IMR-90 (cell line): ENCODE measurements at regions of chr4 and their contacts with region 1.

Region 1: DNA sequence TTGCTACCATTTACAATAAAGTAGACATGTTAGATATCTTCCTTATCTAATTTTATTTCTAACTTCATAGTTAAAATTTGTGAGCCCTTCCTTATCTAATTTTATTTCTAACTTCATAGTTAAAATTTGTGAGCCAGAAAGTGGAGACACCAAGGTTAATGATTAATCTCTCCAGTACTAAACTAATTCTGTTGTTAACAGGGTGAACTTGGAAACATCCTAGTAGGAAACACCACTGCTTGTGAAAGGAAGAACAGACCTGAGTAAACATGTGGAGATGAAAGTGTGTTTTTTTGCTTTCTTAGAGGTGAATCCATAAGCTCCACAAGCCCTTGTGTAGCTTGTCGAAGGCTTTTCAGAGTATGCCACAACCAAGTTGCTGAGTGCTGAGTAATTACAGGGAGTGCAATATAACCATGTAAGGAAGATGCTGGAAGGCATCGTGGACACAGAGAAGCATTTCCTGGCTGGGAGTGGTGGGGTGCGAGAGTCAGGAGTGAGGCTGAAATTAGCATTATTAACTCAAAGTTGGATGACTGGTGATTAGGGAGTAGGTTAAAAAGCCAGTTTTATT is 118.6 kb upstream of the NEIL3 start:
- DNase-seq: peak; percentile 47
- ATAC-seq: peak; percentile 86
- H3K4me3 ChIP-seq: no peak overlapping the region
- H3K27ac ChIP-seq: 0 out of 2 replicates have a peak overlapping the region, but pooled peaks have one; percentile 20
- H3K4me1 ChIP-seq: peaks cover 3% of the 10 kb centered on the region
- H3K27me3 ChIP-seq: no peaks in the 10 kb centered on the region
- CTCF ChIP-seq: no peak
- POLR2A ChIP-seq: no peak
- RAD21 ChIP-seq: no peak

Region 2: DNA sequence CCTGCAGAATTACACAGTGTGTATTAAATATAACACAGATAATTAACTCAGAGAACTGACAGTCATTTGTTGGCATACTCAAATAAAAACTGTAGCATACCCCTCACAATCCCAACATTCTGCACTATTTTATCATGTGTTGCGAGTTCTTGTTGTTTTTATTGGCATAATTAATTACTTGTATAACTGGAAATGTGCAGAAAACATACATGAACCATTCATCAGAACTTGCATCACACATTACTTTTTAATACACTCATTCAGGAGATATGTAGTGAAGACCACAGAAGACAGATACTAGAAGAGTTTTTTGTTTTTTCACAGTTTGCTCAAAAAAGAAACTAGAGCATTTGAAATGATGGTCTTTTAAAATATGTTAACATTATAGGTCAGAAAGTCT is 43.9 kb after region 1 on chr4:
- CTCF ChIA-PET with region 1: interaction called, 3 read pairs
- POLR2A ChIA-PET with region 1: no interaction called
- dilution Hi-C with region 1: no loop called
- in situ Hi-C with region 1: no loop called
- intact Hi-C with region 1: loop called (anchors 5 kb)
- DNase-seq: peak; percentile 82
- ATAC-seq: peak; percentile 24; the same call in 1 of the 2 replicates
- H3K4me3 ChIP-seq: no peak overlapping the region
- H3K27ac ChIP-seq: no peak overlapping the region
- H3K4me1 ChIP-seq: peaks cover 5% of the 10 kb centered on the region
- H3K27me3 ChIP-seq: no peaks in the 10 kb centered on the region
- CTCF ChIP-seq: no peak
- POLR2A ChIP-seq: no peak
- RAD21 ChIP-seq: no peak

Region 3: DNA sequence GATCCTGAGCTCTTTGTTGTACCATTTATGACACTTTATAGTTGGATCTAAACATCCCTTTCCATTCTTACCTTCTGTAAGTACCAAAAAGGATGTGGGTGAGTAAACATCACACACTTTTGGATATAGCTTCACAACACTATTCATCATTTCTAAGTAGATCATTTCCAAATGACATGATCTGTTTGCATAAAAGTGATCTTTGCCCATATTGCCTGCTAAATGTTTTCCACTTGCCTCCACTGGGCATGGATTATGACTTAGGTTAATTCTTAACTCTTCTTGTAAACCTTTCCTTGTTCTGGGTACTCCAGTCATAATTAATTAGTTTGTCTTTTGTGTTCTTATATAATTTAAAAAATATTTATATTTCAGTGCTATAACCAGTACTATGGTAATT is 496.0 kb after region 1 on chr4:
- CTCF ChIA-PET with region 1: no interaction called
- POLR2A ChIA-PET with region 1: no interaction called
- dilution Hi-C with region 1: no loop called
- in situ Hi-C with region 1: no loop called
- intact Hi-C with region 1: no loop called
- DNase-seq: no peak
- ATAC-seq: no peak
- H3K4me3 ChIP-seq: no peak overlapping the region
- H3K27ac ChIP-seq: no peak overlapping the region
- H3K4me1 ChIP-seq: no peaks in the 10 kb centered on the region
- H3K27me3 ChIP-seq: no peaks in the 10 kb centered on the region
- CTCF ChIP-seq: no peak
- POLR2A ChIP-seq: no peak
- RAD21 ChIP-seq: no peak